T-cell (primary cell): ENCODE measurements at regions of chrX and their contacts with region 1.

Region 1: GRCh38 chrX:129925305-129926092 is 19.5 kb downstream of the UTP14A start:
- DNase-seq: peak; percentile 39 to 82 (median 59)
- ATAC-seq: peak; percentile 57 to 83 (median 72)
- H3K4me3 ChIP-seq: no peak overlapping the region
- H3K4me3 Mint-ChIP-seq: no peak overlapping the region
- H3K27ac ChIP-seq: no peak overlapping the region
- H3K27ac Mint-ChIP-seq: no peak overlapping the region
- H3K4me1 ChIP-seq: peaks cover 0 to 3% of the 10 kb centered on the region in 2 experiments
- H3K4me1 Mint-ChIP-seq: peaks cover 3 to 4% (median 3%) of the 10 kb centered on the region in 3 donors
- H3K27me3 ChIP-seq: no peaks in the 10 kb centered on the region
- H3K27me3 Mint-ChIP-seq: peaks cover 0 to 6% of the 10 kb centered on the region in 2 donors

Region 2: GRCh38 chrX:129905787-129906580 is 19.5 kb before region 1 on chrX and contains the start of gene UTP14A:
- CTCF ChIA-PET with region 1: interaction called, 7 to 11 read pairs
- POLR2A ChIA-PET with region 1: no interaction called
- DNase-seq: peak; percentile 54 to 92 (median 78)
- ATAC-seq: peak; percentile 94 to 96 (median 96)
- H3K4me3 ChIP-seq: peak within 1 kb of the TSS; percentile 72 to 78
- H3K4me3 Mint-ChIP-seq: peak within 1 kb of the TSS; percentile 85 to 90 (median 86)
- H3K27ac ChIP-seq: peak within 1 kb of the TSS; percentile 49
- H3K27ac Mint-ChIP-seq: peak within 1 kb of the TSS; percentile 65 to 79
- H3K4me1 ChIP-seq: peaks cover 0 to 10% of the 10 kb centered on the region in 2 experiments
- H3K4me1 Mint-ChIP-seq: peaks cover 0 to 10% (median 5%) of the 10 kb centered on the region in 3 donors
- H3K27me3 ChIP-seq: no peaks in the 10 kb centered on the region
- H3K27me3 Mint-ChIP-seq: peaks cover 0 to 6% of the 10 kb centered on the region in 2 donors
- total RNA-seq, gene UTP14A: 10.7 to 21.7 (median 18.7) TPM

Region 3: DNA sequence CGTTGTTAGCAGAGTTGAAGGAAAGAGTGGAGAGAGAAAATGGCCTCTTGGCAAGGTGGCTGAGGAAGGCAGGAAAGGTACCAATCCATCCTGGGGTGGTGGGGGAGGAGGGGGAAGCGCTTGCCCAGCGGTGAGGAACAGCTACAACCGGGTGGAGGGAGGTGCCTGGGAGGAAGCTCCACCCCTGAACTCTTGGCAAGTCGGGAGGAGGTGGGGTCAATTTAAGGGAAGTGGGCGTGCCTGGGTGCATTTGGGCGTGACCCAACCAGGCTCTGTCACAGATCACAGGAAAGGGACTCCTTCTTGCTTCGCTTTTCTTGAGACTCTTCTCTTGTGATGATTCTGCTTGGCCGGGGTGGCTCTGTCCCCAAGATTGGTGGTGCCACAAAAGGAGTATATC is 98.6 kb after region 1 on chrX:
- CTCF ChIA-PET with region 1: interaction called, 42 to 100 read pairs
- POLR2A ChIA-PET with region 1: interaction called in 1 of 2 experiments, 5 read pairs
- DNase-seq: peak; percentile 62 to 89 (median 80)
- ATAC-seq: peak; percentile 99 to 100 (median 100)
- H3K4me3 ChIP-seq: no peak overlapping the region
- H3K4me3 Mint-ChIP-seq: peak overlapping the region; percentile 31 to 42 (median 39)
- H3K27ac ChIP-seq: peak overlapping the region; percentile 49
- H3K27ac Mint-ChIP-seq: peak overlapping the region; percentile 68 to 81
- H3K4me1 ChIP-seq: peaks cover 2 to 13% of the 10 kb centered on the region in 2 experiments
- H3K4me1 Mint-ChIP-seq: peaks cover 13 to 15% (median 14%) of the 10 kb centered on the region in 3 donors
- H3K27me3 ChIP-seq: no peaks in the 10 kb centered on the region
- H3K27me3 Mint-ChIP-seq: no peaks in the 10 kb centered on the region